Tibial artery (tissue), 4 donors: ENCODE measurements at regions of chr2 and their contacts with region 1.

Region 1: GRCh38 chr2:11329781-11330180 is 14.7 kb downstream of the ROCK2 start:
- DNase-seq: no peak
- H3K4me3 ChIP-seq: peak overlapping the region in 1 of 2 donors; percentile 39
- H3K27ac ChIP-seq: peak overlapping the region in 1 of 2 donors; percentile 52
- H3K4me1 ChIP-seq: peaks cover 0 to 72% (median 16%) of the 10 kb centered on the region in 4 donors
- H3K27me3 ChIP-seq: no peaks in the 10 kb centered on the region
- CTCF ChIP-seq: no peak

Region 2: GRCh38 chr2:11239666-11240462 is 89.9 kb before region 1 on chr2:
- intact Hi-C with region 1: loop called (anchors 10 kb)
- DNase-seq: no peak
- H3K4me3 ChIP-seq: no peak overlapping the region
- H3K27ac ChIP-seq: no peak overlapping the region
- H3K4me1 ChIP-seq: peaks cover 0 to 24% (median 0%) of the 10 kb centered on the region in 4 donors
- H3K27me3 ChIP-seq: no peaks in the 10 kb centered on the region
- CTCF ChIP-seq: no peak

Region 3: GRCh38 chr2:11281186-11281585 is 48.6 kb before region 1 on chr2:
- intact Hi-C with region 1: loop called (anchors 5 kb)
- DNase-seq: no peak
- H3K4me3 ChIP-seq: no peak overlapping the region
- H3K27ac ChIP-seq: no peak overlapping the region
- H3K4me1 ChIP-seq: peaks cover 0 to 15% (median 0%) of the 10 kb centered on the region in 4 donors
- H3K27me3 ChIP-seq: no peaks in the 10 kb centered on the region
- CTCF ChIP-seq: no peak

Region 4: DNA sequence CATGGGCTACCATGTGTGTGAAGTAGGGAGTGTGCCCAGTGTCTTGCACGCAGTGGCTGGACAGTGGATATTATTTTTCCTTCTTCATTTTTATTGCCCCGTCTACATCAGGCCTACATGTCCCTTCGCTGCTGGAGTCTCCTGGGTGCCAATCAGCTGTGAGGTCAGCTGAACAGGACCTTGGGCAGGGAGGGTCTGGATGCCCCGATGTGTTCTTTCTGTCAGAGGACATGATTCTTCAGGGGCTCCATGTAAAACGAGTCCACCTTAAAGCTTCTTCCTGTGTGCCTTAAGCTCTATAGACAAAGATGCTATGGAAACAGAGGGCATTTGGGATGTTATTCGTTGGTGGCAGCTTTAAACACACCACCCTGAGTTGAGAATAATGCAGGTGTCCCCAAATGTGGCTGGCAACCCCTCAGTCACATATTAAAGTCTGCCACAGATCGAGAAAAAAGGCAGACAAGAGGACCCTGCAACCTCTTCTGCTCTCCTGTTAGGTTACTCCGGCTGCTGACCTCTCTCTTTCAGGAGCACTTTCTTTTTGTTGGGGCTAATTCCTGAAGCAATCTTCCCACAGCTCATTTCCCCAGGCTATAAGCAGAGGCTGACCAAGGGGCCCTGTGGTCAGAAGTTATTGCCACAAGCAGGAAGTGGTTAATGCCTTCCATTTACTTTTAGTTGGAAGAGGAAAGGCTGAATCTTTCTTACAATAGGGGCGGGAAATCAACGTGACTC is 224.0 kb after region 1 on chr2:
- intact Hi-C with region 1: no loop called
- DNase-seq: no peak
- H3K4me3 ChIP-seq: no peak overlapping the region
- H3K27ac ChIP-seq: no peak overlapping the region
- H3K4me1 ChIP-seq: no peaks in the 10 kb centered on the region
- H3K27me3 ChIP-seq: peaks cover 0 to 23% of the 10 kb centered on the region in 2 donors
- CTCF ChIP-seq: no peak